ENCODE measurements at regions of chr13 and their contacts with region 1.

Region 1: GRCh38 chr13:95834134-95834765 is 157.3 kb downstream of the DNAJC3 start:
- DNase-seq: peak; percentile 34
- H3K4me3 Mint-ChIP-seq: no peak overlapping the region
- H3K27ac Mint-ChIP-seq: no peak overlapping the region
- H3K4me1 Mint-ChIP-seq: no peaks in the 10 kb centered on the region
- H3K27me3 Mint-ChIP-seq: peaks cover 7% of the 10 kb centered on the region

Region 2: DNA sequence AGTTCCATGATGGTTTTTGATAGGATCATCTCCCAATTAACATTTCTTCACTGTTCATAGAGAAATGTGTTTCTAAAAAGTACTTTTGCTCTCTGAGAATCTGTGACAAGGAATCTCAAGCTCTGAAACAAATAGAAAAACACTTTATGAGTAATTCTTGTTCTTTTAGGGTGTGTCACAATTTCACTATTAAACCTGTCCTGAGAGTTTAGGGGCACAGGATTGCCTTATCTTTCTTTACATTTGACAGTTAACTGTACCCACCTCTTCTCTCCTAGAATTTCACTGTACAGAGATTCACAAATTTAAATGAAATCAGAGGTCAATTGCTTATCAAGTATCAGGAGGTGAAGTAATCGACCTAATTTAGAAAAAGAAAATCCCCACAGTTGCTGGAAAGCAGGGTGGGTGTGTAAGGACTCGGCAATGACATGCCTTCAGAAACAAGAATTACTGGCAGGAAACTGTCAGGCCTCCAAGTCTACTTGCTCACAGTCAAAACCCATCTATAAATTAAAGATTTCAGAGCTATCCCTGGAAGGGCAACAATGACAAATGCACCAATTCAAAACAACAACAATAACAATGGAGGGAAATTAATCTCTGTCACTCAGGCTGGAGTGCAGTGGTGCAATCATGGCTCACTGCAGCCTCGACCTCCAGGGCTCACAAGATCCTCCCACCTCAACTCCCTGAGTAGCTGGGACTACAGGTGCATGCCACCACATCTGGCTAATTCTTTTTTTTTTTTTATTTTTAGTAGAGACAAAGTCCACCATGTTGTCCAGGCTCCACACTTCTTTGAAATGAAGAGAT is 783.2 kb before region 1 on chr13:
- intact Hi-C with region 1: no loop called
- DNase-seq: no peak
- H3K4me3 Mint-ChIP-seq: no peak overlapping the region
- H3K27ac Mint-ChIP-seq: peak overlapping the region; percentile 93
- H3K4me1 Mint-ChIP-seq: peaks cover 24% of the 10 kb centered on the region
- H3K27me3 Mint-ChIP-seq: no peaks in the 10 kb centered on the region

Region 3: GRCh38 chr13:95494082-95494681 is 340.1 kb before region 1 on chr13:
- intact Hi-C with region 1: loop called (anchors 2 kb)
- DNase-seq: no peak
- H3K4me3 Mint-ChIP-seq: no peak overlapping the region
- H3K27ac Mint-ChIP-seq: no peak overlapping the region
- H3K4me1 Mint-ChIP-seq: no peaks in the 10 kb centered on the region
- H3K27me3 Mint-ChIP-seq: peaks cover 7% of the 10 kb centered on the region

Region 4: GRCh38 chr13:95536632-95537241 is 297.5 kb before region 1 on chr13:
- intact Hi-C with region 1: loop called (anchors 1 kb)
- DNase-seq: no peak
- H3K4me3 Mint-ChIP-seq: no peak overlapping the region
- H3K27ac Mint-ChIP-seq: no peak overlapping the region
- H3K4me1 Mint-ChIP-seq: peaks cover 8% of the 10 kb centered on the region
- H3K27me3 Mint-ChIP-seq: peaks cover 10% of the 10 kb centered on the region

Measured in activated T-helper 2 cell treated with anti-CD3 and anti-CD28 coated beads, Interferon-gamma antibody, Interleukin-2, Interleukin-4, amounts not matched to agents 10 μg/mL and 5 μg/mL and 100 μg/mL, durations not matched to agents 14 hours and 24 hours and 36 hours (primary cell).